Sigmoid colon (tissue), 7 donors: ENCODE measurements at regions of chr2 and their contacts with region 1.

Region 1: GRCh38 chr2:37376421-37377186 is 32.2 kb downstream of the QPCT start:
- DNase-seq: peak; percentile 95
- H3K4me3 ChIP-seq: peak overlapping the region in 3 of 4 donors; percentile 1 to 15 (median 11)
- H3K27ac ChIP-seq: peak overlapping the region; percentile 53 to 87 (median 78)
- H3K4me1 ChIP-seq: peaks cover 0 to 65% (median 53%) of the 10 kb centered on the region in 4 donors
- H3K27me3 ChIP-seq: no peaks in the 10 kb centered on the region
- CTCF ChIP-seq: no peak
- EP300 ChIP-seq: peak; percentile 85 to 98 (median 96)
- POLR2A ChIP-seq: no peak

Region 2: DNA sequence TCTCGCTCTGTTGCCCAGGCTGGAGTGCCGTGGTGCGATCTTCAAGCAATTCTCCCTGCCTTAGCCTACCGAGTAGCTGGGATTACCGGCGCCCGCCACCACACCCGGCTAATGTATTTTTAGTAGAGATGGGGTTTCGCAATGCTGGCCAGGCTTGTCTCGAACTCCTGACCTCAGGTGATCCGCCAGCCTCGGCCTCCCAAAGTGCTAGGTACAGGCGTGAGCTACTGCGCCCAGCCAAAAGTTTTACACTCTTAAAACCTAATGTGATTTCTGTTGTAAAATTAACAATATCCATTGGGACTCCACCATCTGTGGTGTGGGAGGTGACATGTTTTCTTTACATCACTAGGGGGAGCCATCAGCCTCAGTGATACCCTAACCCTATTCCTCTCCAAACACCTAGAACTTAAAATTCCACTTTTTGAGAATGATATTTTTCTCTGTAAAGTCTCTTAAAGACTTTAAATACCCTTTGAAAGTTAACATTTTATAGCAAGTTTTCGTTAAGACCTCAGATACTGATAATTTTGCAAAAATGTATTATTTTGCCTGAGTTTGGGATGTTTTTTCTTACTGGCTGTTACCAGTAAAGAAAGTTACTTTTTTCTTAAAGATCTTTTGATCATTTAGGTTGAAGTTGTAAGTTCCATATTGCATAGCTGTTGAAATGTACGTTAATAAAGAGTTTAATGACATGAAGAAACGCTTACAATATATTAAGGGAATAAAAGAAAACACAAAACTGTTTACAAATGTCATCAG is 208.2 kb before region 1 on chr2:
- intact Hi-C with region 1: no loop called
- DNase-seq: no peak
- H3K4me3 ChIP-seq: no peak overlapping the region
- H3K27ac ChIP-seq: no peak overlapping the region
- H3K4me1 ChIP-seq: no peaks in the 10 kb centered on the region
- H3K27me3 ChIP-seq: no peaks in the 10 kb centered on the region
- CTCF ChIP-seq: peak; percentile 6 to 60 (median 38)
- EP300 ChIP-seq: no peak
- POLR2A ChIP-seq: no peak

Region 3: GRCh38 chr2:37274359-37274965 is 102.1 kb before region 1 on chr2:
- intact Hi-C with region 1: loop called (anchors 2 kb)
- DNase-seq: peak; percentile 74
- H3K4me3 ChIP-seq: no peak overlapping the region
- H3K27ac ChIP-seq: peak overlapping the region in 3 of 4 donors; percentile 32 to 74 (median 64)
- H3K4me1 ChIP-seq: peaks cover 0 to 39% (median 17%) of the 10 kb centered on the region in 4 donors
- H3K27me3 ChIP-seq: no peaks in the 10 kb centered on the region
- CTCF ChIP-seq: no peak
- EP300 ChIP-seq: peak in 2 of 4 donors; percentile 28 to 72
- POLR2A ChIP-seq: no peak

Region 4: DNA sequence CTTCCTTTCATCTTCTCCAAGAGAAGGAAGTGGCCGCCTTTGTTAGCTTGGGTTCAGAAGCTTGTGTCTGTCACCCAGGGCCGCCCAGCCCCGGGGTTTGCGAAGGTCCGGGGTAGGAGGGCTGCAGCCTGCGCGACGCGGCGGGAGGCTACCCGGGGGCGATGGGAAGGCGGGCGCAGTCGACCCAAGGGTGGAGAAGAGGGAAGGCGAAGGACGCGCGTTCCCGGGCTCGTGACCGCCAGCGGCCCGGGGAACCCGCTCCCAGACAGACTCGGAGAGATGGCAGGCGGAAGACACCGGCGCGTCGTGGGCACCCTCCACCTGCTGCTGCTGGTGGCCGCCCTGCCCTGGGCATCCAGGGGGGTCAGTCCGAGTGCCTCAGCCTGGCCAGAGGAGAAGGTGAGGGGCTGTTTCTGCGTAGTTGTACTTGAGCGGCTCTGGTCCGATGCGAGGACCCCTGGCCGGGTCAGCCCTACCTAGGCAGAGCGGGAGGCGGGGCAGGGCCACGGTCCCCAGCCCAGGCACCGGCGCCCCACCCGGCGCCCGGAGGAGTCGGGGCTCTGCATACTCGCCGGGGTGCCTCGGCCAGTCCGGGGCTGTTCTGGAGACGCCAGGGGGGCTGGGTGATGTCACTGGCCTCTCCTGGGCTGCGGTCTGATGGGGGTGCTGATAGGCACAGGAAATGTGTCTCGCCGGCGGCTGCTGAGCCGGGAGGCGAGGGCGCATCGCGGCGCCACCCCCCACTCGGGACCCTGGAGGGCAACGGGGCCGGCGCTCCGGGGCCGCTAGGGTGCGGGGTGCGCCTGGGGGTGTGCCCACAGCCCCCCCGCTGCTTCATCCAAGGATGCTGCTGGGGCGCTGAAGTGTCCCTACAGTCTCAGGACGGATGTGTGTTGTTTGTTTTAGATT is 31.9 kb before region 1 on chr2 and contains the start of gene QPCT:
- intact Hi-C with region 1: loop called (anchors 2 kb)
- DNase-seq: peak; percentile 87
- H3K4me3 ChIP-seq: peak within 1 kb of the TSS; percentile 63 to 77 (median 70)
- H3K27ac ChIP-seq: peak within 1 kb of the TSS in 3 of 4 donors; percentile 85 to 95 (median 85)
- H3K4me1 ChIP-seq: peaks cover 0 to 39% (median 22%) of the 10 kb centered on the region in 4 donors
- H3K27me3 ChIP-seq: no peaks in the 10 kb centered on the region
- CTCF ChIP-seq: no peak
- EP300 ChIP-seq: no peak
- POLR2A ChIP-seq: peak in 1 of 2 donors; percentile 26
- total RNA-seq, gene QPCT: 65.8 to 94.9 (median 75.0) TPM